Right ventricle myocardium superior (tissue), 1 donor: ENCODE measurements at regions of chr10 and their contacts with region 1.

Region 1: GRCh38 chr10:60816628-60817397 is 38.5 kb downstream of the CDK1 start:
- DNase-seq: no peak
- ATAC-seq: peak; percentile 96

Region 2: DNA sequence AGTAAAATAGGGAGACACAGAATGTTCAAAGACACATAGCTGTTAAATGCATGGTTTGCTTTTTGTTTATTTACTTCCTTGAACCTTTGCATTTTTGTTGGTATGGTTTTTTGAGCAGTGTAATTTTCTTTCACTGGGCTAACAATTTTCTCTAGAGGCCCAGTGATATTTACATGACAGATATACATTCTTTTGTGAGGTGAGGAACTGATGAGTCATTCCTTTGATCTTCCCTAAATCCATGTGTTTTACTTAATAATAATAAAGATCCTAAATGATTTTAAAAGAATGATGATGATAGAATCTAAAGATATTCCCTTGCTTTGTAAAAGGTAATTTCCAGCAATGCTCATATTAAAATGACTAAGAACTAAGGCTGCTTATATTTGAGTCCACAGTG is 238.6 kb before region 1 on chr10:
- intact Hi-C with region 1: no loop called
- DNase-seq: no peak
- ATAC-seq: no peak

Region 3: DNA sequence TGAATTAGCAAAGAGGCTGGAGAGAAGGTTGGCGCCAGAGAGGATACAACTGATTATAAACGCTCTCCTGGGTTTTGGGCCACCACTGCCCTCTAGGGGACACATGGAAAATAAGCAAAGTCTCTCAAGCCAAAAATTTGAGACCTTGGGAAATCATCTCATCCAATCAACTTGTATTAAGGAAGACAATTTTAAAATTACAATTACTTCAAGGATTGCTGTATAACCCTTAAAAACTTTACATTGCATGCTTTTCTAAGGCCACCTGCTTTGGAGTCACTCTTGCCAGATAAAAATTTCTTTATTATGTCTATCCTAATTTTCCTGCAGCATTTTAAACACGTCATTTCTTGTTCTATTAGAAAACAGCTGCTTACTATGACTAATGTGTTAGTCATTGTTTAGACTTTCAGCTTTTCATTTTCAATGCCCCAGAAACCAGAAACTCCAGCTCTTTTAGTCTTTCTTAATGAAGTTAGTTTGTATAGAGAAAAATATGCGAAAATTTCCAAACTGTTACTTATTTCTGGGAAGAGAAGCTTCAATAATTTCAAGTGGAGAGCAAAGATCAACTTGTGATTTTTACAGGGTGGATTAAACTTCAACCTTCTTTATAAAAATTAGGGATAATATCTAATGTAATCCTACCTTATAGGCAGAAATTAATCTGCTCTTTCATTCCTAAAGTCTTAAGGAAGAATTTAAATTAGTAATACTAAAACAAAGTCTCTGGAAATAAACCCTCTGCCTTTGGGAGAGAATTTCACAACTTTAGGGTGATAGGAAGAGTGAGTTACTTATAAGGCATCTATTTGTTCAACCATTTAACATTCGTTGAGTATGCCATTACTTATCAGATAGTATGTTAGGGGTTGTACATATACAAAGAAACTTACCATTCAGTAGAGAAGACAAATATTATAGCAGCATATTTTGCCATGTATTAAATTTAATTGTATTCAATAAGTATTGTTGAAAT is 147.7 kb after region 1 on chr10:
- intact Hi-C with region 1: loop called (anchors 2 kb)
- DNase-seq: peak; percentile 59
- ATAC-seq: peak; percentile 93

Region 4: GRCh38 chr10:61140765-61141392 is 324.1 kb after region 1 on chr10:
- intact Hi-C with region 1: loop called (anchors 5 kb)
- DNase-seq: no peak
- ATAC-seq: peak; percentile 72